CD8-positive, alpha-beta T cell (primary cell): ENCODE measurements at regions of chr1 and their contacts with region 1.

Region 1: DNA sequence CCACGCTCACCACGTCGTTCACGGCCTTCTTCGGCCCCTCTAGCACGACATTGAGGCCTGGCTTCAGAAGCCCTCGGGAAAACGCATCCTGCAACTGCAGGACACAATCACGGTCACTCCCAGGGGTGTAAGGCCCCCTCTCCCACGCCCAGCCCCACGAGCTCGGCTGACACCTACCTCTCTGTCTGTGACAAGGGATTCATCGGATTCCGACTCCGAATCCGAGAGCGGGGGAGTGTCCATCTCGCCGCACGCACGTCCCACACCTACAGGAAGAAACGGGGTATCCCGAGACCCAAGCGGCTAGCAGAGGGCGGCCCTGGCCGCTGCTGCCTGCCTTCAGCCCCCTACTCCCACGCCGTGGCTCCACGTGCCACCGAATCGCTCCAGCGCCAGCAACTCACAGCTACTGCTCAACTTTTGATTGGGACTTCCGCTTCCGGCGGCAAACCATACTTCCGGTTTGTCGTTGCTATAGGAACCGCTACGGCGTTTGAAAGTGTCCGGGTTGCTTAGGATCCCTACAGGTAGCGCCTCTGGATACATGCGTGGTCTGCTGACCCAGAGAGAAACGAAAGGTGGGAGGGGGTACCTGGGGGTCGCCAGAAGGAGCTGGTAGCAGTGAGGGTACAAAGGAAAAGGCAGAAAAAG is at the starts of genes CFAP57 and EBNA1BP2:
- DNase-seq: peak; percentile 83 to 96 (median 91)
- ATAC-seq: peak; percentile 67
- H3K4me3 ChIP-seq: peak within 1 kb of the TSS; percentile 89 to 93
- H3K4me3 Mint-ChIP-seq: peak within 1 kb of the TSS; percentile 100
- H3K27ac ChIP-seq: peak within 1 kb of the TSS; percentile 73 to 80
- H3K27ac Mint-ChIP-seq: peak within 1 kb of the TSS; percentile 93
- H3K4me1 ChIP-seq: peaks cover 12% of the 10 kb centered on the region
- H3K4me1 Mint-ChIP-seq: peaks cover 32% of the 10 kb centered on the region
- H3K27me3 ChIP-seq: peaks cover 0 to 4% of the 10 kb centered on the region in 2 experiments
- H3K27me3 Mint-ChIP-seq: peaks cover 14% of the 10 kb centered on the region
- CTCF ChIP-seq: no peak
- total RNA-seq, gene CFAP57: not detected
- total RNA-seq, gene EBNA1BP2: 22.1 to 23.1 TPM

Region 2: GRCh38 chr1:42462828-42463763 is 708.9 kb before region 1 on chr1 and contains the start of gene CCDC30:
- CTCF ChIA-PET with region 1: no interaction called
- POLR2A ChIA-PET with region 1: no interaction called
- intact Hi-C with region 1: loop called in 1 of 2 experiments (anchors 2 kb)
- DNase-seq: peak; percentile 92 to 99 (median 94)
- ATAC-seq: peak; percentile 98
- H3K4me3 ChIP-seq: peak within 1 kb of the TSS; percentile 60 to 62
- H3K4me3 Mint-ChIP-seq: peak within 1 kb of the TSS; percentile 84
- H3K27ac ChIP-seq: peak within 1 kb of the TSS; percentile 70 to 83
- H3K27ac Mint-ChIP-seq: peak within 1 kb of the TSS; percentile 93
- H3K4me1 ChIP-seq: peaks cover 23% of the 10 kb centered on the region
- H3K4me1 Mint-ChIP-seq: peaks cover 40% of the 10 kb centered on the region
- H3K27me3 ChIP-seq: no peaks in the 10 kb centered on the region
- H3K27me3 Mint-ChIP-seq: no peaks in the 10 kb centered on the region
- CTCF ChIP-seq: no peak
- total RNA-seq, gene CCDC30: 2.5 to 2.8 TPM

Region 3: GRCh38 chr1:42766741-42767509 is 405.1 kb before region 1 on chr1 and contains the starts of genes C1orf50 and P3H1:
- CTCF ChIA-PET with region 1: no interaction called
- POLR2A ChIA-PET with region 1: no interaction called
- intact Hi-C with region 1: loop called in 1 of 2 experiments (anchors 2 kb)
- DNase-seq: peak; percentile 99 to 100 (median 99)
- ATAC-seq: peak; percentile 92
- H3K4me3 ChIP-seq: peak within 1 kb of the TSS; percentile 73 to 97
- H3K4me3 Mint-ChIP-seq: no peak within 1 kb of the TSS
- H3K27ac ChIP-seq: peak within 1 kb of the TSS; percentile 87 to 88
- H3K27ac Mint-ChIP-seq: peak within 1 kb of the TSS; percentile 97
- H3K4me1 ChIP-seq: peaks cover 40% of the 10 kb centered on the region
- H3K4me1 Mint-ChIP-seq: peaks cover 36% of the 10 kb centered on the region
- H3K27me3 ChIP-seq: no peaks in the 10 kb centered on the region
- H3K27me3 Mint-ChIP-seq: no peaks in the 10 kb centered on the region
- CTCF ChIP-seq: no peak
- total RNA-seq, gene C1orf50: 16.1 to 20.3 TPM
- total RNA-seq, gene P3H1: 19.6 to 22.5 TPM

Region 4: GRCh38 chr1:42913426-42914091 is 258.4 kb before region 1 on chr1:
- CTCF ChIA-PET with region 1: no interaction called
- POLR2A ChIA-PET with region 1: no interaction called
- intact Hi-C with region 1: no loop called
- DNase-seq: peak in 6 of 9 experiments; percentile 45 to 87 (median 64)
- ATAC-seq: peak; percentile 99
- H3K4me3 ChIP-seq: no peak overlapping the region
- H3K4me3 Mint-ChIP-seq: no peak overlapping the region
- H3K27ac ChIP-seq: no peak overlapping the region
- H3K27ac Mint-ChIP-seq: no peak overlapping the region
- H3K4me1 ChIP-seq: no peaks in the 10 kb centered on the region
- H3K4me1 Mint-ChIP-seq: peaks cover 4% of the 10 kb centered on the region
- H3K27me3 ChIP-seq: no peaks in the 10 kb centered on the region
- H3K27me3 Mint-ChIP-seq: peaks cover 3% of the 10 kb centered on the region
- CTCF ChIP-seq: peak; percentile 85

Region 5: GRCh38 chr1:42924082-42924850 is 247.7 kb before region 1 on chr1:
- CTCF ChIA-PET with region 1: no interaction called
- POLR2A ChIA-PET with region 1: interaction called, 4 read pairs
- intact Hi-C with region 1: loop called in 1 of 2 experiments (anchors 1 kb)
- DNase-seq: peak; percentile 78 to 94 (median 91)
- ATAC-seq: peak; percentile 90
- H3K4me3 ChIP-seq: peak overlapping the region; percentile 90 to 96
- H3K4me3 Mint-ChIP-seq: peak overlapping the region; percentile 95
- H3K27ac ChIP-seq: peak overlapping the region; percentile 83 to 91
- H3K27ac Mint-ChIP-seq: peak overlapping the region; percentile 98
- H3K4me1 ChIP-seq: peaks cover 15% of the 10 kb centered on the region
- H3K4me1 Mint-ChIP-seq: peaks cover 35% of the 10 kb centered on the region
- H3K27me3 ChIP-seq: no peaks in the 10 kb centered on the region
- H3K27me3 Mint-ChIP-seq: no peaks in the 10 kb centered on the region
- CTCF ChIP-seq: no peak

Region 6: DNA sequence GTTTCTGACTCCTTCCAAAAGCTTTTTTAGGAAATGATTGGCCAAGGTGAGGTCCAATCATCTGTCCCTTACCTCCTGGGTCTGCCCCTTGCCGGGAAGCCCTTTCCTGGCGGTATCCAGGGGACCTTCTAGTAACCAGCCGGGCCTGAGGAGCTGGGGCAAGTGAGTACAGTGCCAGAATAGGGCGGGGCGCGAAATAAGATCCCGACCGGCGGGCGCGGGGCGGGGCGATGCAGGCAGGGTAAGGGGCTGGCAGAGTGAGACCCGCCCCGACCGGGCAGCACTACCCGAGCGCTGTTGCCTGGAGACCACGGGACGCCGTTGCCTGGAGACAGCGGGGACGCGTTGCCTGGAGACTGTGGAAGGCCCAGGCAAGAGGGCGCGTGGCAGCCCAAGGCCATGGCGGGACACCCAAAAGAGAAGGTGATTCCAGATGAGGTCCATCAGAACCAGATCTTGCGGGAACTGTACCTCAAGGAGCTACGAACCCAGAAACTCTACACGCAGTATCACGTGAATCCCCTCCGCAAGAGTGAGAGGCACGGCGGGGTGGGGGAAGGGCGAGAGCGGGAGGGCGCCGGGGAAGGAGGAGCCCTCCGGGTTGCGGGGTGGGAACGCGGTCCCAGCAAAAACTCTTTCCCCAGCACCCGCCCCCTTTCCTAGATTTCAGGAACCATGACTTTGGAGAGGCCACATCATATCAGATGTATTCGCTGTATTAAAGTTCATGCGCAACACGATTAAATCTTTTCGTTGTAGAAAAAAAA is 24.3 kb before region 1 on chr1:
- CTCF ChIA-PET with region 1: no interaction called
- POLR2A ChIA-PET with region 1: no interaction called
- intact Hi-C with region 1: no loop called
- DNase-seq: peak in 4 of 9 experiments; percentile 15 to 25 (median 19)
- ATAC-seq: peak; percentile 36
- H3K4me3 ChIP-seq: peak overlapping the region; percentile 9 to 30
- H3K4me3 Mint-ChIP-seq: peak overlapping the region; percentile 6
- H3K27ac ChIP-seq: no peak overlapping the region
- H3K27ac Mint-ChIP-seq: no peak overlapping the region
- H3K4me1 ChIP-seq: peaks cover 10% of the 10 kb centered on the region
- H3K4me1 Mint-ChIP-seq: peaks cover 8% of the 10 kb centered on the region
- H3K27me3 ChIP-seq: peaks cover 14% of the 10 kb centered on the region in 2 experiments
- H3K27me3 Mint-ChIP-seq: peaks cover 69% of the 10 kb centered on the region
- CTCF ChIP-seq: no peak

Region 7: GRCh38 chr1:43367904-43368645 is 196.1 kb after region 1 on chr1 and contains the start of gene ELOVL1:
- CTCF ChIA-PET with region 1: no interaction called
- POLR2A ChIA-PET with region 1: no interaction called
- intact Hi-C with region 1: loop called in 1 of 2 experiments (anchors 2 kb)
- DNase-seq: peak; percentile 40 to 93 (median 85)
- ATAC-seq: peak; percentile 68
- H3K4me3 ChIP-seq: peak within 1 kb of the TSS; percentile 65 to 74
- H3K4me3 Mint-ChIP-seq: peak within 1 kb of the TSS; percentile 88
- H3K27ac ChIP-seq: peak within 1 kb of the TSS; percentile 63 to 78
- H3K27ac Mint-ChIP-seq: peak within 1 kb of the TSS; percentile 93
- H3K4me1 ChIP-seq: peaks cover 17% of the 10 kb centered on the region
- H3K4me1 Mint-ChIP-seq: peaks cover 42% of the 10 kb centered on the region
- H3K27me3 ChIP-seq: no peaks in the 10 kb centered on the region
- H3K27me3 Mint-ChIP-seq: no peaks in the 10 kb centered on the region
- CTCF ChIP-seq: no peak
- total RNA-seq, gene ELOVL1: 24.6 to 25.6 TPM

Region 8: DNA sequence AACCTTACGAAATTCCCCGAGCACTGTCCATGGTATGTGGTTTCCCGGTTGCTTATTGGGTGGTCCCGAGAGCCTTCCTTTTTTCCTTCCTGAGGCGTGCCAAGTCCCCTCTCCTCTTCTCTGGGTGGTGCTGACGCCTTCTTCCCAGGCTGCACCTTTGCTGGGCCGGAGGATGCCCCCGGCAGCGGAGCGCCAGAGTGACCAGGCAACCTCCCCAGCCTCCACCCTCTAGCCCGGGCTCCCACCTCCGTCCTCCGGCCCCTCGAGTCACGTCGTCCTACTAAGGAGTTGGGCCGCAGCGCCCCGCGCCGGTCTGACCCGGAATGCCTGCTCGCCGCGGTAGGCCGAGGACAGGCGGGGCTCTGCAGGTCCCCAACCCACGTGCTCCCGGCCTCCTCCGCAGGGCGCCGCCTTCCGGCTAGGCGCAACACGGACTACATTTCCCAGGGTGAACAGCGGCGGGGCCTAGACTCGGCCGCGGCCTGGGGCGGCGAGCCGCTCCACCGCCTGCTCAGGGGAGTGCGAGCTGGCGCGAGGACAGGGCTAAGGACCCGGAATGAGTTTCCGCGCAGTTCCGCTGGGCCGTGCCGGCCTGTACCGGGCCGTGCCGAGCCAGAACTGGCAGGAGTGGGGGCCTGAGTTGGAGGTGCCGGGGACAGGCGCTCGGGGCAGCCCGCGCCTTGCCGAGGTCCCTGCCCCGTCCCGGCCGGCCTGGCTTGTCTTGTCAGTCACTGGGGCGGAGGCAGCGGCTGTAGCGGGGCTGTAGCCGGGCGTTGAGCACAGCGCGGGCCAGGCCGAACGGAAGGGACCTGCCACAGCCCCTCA is 774.4 kb after region 1 on chr1 and contains the start of gene IPO13:
- CTCF ChIA-PET with region 1: no interaction called
- POLR2A ChIA-PET with region 1: no interaction called
- intact Hi-C with region 1: loop called in 1 of 2 experiments (anchors 1 kb)
- DNase-seq: peak; percentile 89 to 97 (median 94)
- ATAC-seq: peak; percentile 95
- H3K4me3 ChIP-seq: peak within 1 kb of the TSS; percentile 90 to 98
- H3K4me3 Mint-ChIP-seq: peak within 1 kb of the TSS; percentile 88
- H3K27ac ChIP-seq: peak within 1 kb of the TSS; percentile 92 to 99
- H3K27ac Mint-ChIP-seq: peak within 1 kb of the TSS; percentile 96
- H3K4me1 ChIP-seq: peaks cover 22% of the 10 kb centered on the region
- H3K4me1 Mint-ChIP-seq: peaks cover 63% of the 10 kb centered on the region
- H3K27me3 ChIP-seq: no peaks in the 10 kb centered on the region
- H3K27me3 Mint-ChIP-seq: no peaks in the 10 kb centered on the region
- CTCF ChIP-seq: peak; percentile 54
- total RNA-seq, gene IPO13: 6.5 to 8.1 TPM

Region 9: GRCh38 chr1:44213222-44214112 is 1041.5 kb after region 1 on chr1 and contains the start of gene DMAP1:
- CTCF ChIA-PET with region 1: no interaction called
- POLR2A ChIA-PET with region 1: no interaction called
- intact Hi-C with region 1: loop called in 1 of 2 experiments (anchors 10 kb)
- DNase-seq: peak; percentile 75 to 95 (median 86)
- ATAC-seq: peak; percentile 83
- H3K4me3 ChIP-seq: peak within 1 kb of the TSS; percentile 91
- H3K4me3 Mint-ChIP-seq: peak within 1 kb of the TSS; percentile 95
- H3K27ac ChIP-seq: peak within 1 kb of the TSS; percentile 61 to 74
- H3K27ac Mint-ChIP-seq: peak within 1 kb of the TSS; percentile 83
- H3K4me1 ChIP-seq: peaks cover 18% of the 10 kb centered on the region
- H3K4me1 Mint-ChIP-seq: peaks cover 42% of the 10 kb centered on the region
- H3K27me3 ChIP-seq: no peaks in the 10 kb centered on the region
- H3K27me3 Mint-ChIP-seq: no peaks in the 10 kb centered on the region
- CTCF ChIP-seq: no peak
- total RNA-seq, gene DMAP1: 59.0 to 59.5 TPM